PC-3 (cell line): ENCODE measurements at regions of chr17 and their contacts with region 1.

Region 1: GRCh38 chr17:3893003-3893719 is at the start of gene CAMKK1:
- DNase-seq: peak; percentile 85
- ATAC-seq: peak; percentile 48
- H3K4me3 ChIP-seq: peak within 1 kb of the TSS; percentile 79
- H3K27ac ChIP-seq: peak within 1 kb of the TSS; percentile 27
- H3K4me1 ChIP-seq: peaks cover 59% of the 10 kb centered on the region
- H3K27me3 ChIP-seq: no peaks in the 10 kb centered on the region
- CTCF ChIP-seq: no peak
- total RNA-seq, gene CAMKK1: 10.1 and 12.4 TPM in 2 replicates

Region 2: DNA sequence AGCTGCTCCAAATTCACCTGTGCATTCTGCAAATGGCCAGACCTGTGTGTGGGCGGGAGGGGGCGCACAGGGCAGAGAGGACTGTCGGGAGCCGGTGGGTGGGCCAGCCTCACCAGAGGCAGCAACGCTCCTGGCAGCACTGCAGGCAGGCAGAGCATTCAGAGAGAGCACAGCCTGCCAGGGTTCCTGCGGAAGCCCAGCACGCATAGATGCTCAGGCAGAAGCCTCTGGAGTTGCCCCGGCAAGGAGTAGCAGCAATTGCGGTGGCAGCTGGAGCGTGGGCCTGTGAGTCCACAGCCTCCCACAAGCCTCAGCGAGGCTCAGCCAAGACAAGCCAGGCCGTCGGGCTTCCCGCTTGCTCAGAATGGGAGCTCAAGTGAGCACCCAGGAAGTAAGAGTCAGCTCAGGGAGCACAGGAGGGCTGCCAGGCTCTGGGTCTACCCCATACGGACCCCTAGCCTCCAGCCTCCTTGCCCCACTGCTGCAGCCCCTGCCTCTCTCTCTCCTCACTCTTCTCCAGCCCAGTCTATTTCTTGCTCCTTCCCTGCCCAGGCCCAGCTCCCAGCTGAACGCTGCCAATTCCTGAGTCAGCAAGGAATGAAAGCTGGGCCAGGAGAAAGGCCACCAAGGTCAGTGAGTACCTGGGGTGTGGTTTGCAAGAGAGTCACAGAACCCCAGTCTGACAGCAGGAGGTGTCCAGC is 214.9 kb before region 1 on chr17:
- CTCF ChIA-PET with region 1: no interaction called
- POLR2A ChIA-PET with region 1: no interaction called
- intact Hi-C with region 1: no loop called
- DNase-seq: peak; percentile 26
- ATAC-seq: peak; percentile 69
- H3K4me3 ChIP-seq: no peak overlapping the region
- H3K27ac ChIP-seq: no peak overlapping the region
- H3K4me1 ChIP-seq: no peaks in the 10 kb centered on the region
- H3K27me3 ChIP-seq: no peaks in the 10 kb centered on the region
- CTCF ChIP-seq: no peak

Region 3: GRCh38 chr17:3802461-3803307 is 90.5 kb before region 1 on chr17:
- CTCF ChIA-PET with region 1: no interaction called
- POLR2A ChIA-PET with region 1: interaction called, 20 read pairs
- intact Hi-C with region 1: no loop called
- DNase-seq: peak; percentile 79
- ATAC-seq: peak; percentile 74
- H3K4me3 ChIP-seq: no peak overlapping the region
- H3K27ac ChIP-seq: peak overlapping the region; percentile 89
- H3K4me1 ChIP-seq: peaks cover 31% of the 10 kb centered on the region
- H3K27me3 ChIP-seq: no peaks in the 10 kb centered on the region
- CTCF ChIP-seq: no peak

Region 4: GRCh38 chr17:3968015-3968414 is 74.9 kb after region 1 on chr17:
- CTCF ChIA-PET with region 1: no interaction called
- POLR2A ChIA-PET with region 1: interaction called, 13 read pairs
- intact Hi-C with region 1: no loop called
- DNase-seq: no peak
- ATAC-seq: no peak
- H3K4me3 ChIP-seq: no peak overlapping the region
- H3K27ac ChIP-seq: no peak overlapping the region
- H3K4me1 ChIP-seq: no peaks in the 10 kb centered on the region
- H3K27me3 ChIP-seq: no peaks in the 10 kb centered on the region
- CTCF ChIP-seq: no peak